ENCODE measurements at regions of chr15 and their contacts with region 1.

Region 1: GRCh38 chr15:64102497-64102896 is 6.7 kb downstream of the SNX1 start:
- DNase-seq: no peak
- ATAC-seq: no peak
- H3K4me3 Mint-ChIP-seq: no peak overlapping the region
- H3K27ac Mint-ChIP-seq: no peak overlapping the region
- H3K4me1 Mint-ChIP-seq: peaks cover 20% of the 10 kb centered on the region
- H3K27me3 Mint-ChIP-seq: no peaks in the 10 kb centered on the region

Region 2: DNA sequence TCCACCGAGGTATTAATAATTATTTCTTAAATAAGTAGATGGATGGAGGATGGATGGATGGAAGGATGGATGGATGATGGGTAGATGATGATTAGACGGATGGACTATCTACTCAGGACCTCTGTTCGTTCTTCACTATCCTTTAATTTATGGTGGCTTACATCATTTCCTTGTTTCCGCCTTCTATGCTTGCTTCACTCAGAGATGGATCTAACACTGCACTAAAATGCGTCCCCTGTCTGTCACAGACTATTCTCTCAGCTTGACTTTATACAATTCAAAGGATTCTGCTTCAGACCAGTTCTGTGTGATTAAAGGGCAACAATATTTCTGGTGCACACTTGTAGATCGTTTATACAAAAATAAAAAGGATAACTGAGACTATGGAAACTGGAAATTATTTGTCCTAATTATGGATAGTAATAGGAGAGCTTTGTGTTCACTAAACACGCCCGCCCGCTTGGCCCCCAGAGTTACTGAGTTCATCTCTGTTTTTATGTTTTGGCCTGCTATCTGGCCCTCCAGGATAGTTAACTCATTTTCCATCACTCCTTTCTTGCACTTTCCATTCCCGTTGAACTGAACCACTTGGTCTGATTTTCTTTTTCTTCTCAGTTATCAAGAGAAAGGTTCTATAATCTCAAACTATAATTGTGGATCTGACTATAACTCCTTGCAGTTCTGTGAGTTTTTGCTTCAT is 679.5 kb before region 1 on chr15:
- POLR2A ChIA-PET with region 1: interaction called, 10 read pairs
- DNase-seq: no peak
- ATAC-seq: no peak
- H3K4me3 Mint-ChIP-seq: no peak overlapping the region
- H3K27ac Mint-ChIP-seq: no peak overlapping the region
- H3K4me1 Mint-ChIP-seq: no peaks in the 10 kb centered on the region
- H3K27me3 Mint-ChIP-seq: no peaks in the 10 kb centered on the region

Measured in activated naive CD8-positive, alpha-beta T cell treated with anti-CD3 and anti-CD28 coated beads, Interleukin-2, amount 10 ng/mL, durations not matched to agents 7 days and 5 days (primary cell).